GM12878 (cell line): ENCODE measurements at regions of chr1 and their contacts with region 1.

Region 1: DNA sequence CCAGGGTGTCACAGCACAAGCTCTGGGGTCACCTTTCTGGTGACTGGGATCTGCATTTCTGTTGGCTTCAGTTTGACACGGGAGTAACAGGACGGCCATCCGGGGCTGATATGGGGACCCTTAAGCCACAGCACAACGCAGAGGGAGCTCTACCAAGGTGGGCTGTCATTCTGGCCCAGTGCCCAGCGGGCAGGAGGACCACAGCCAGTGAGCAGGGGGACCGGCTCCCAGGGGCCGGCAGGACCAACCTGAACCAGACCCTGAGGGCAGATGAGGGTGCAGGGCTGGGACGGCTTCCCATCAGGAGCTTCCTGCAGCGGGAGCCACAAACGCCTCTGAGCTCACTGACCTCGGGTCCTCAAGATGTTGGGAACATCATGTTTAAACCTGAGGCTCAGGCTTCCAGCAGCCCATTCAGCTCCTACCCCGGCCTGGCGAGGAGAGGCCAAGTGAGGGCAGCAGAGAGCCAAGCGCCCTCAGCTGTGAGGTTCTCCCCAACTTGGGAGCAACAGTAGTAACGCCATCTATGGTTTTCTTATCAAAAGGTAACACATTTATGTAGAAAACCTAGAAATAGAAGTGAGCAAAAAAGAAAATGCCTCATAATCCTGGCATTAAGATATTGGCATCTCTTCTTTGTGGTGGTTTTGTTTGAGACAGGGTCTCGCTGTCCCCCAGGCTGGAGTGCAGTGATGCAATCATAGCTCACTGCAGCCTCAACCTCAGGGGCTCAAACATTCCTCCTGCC is 26.8 kb downstream of the TMEM201 start:
- DNase-seq: no peak
- ATAC-seq: peak; percentile 98
- H3K4me3 ChIP-seq: no peak overlapping the region
- H3K27ac ChIP-seq: no peak overlapping the region
- H3K4me1 ChIP-seq: no peaks in the 10 kb centered on the region
- H3K27me3 ChIP-seq: no peaks in the 10 kb centered on the region
- CTCF ChIP-seq: peak; percentile 95 to 96 (median 96)
- EP300 ChIP-seq: no peak
- POLR2A ChIP-seq: no peak
- RAD21 ChIP-seq: peak; percentile 77

Region 2: GRCh38 chr1:9588551-9589143 is 26.8 kb before region 1 on chr1 and contains the start of gene TMEM201:
- CTCF ChIA-PET with region 1: interaction called, 37 read pairs
- POLR2A ChIA-PET with region 1: interaction called, 3 read pairs
- RAD21 ChIA-PET with region 1: interaction called, 10 read pairs
- SMC1A ChIA-PET with region 1: interaction called, 6 read pairs
- in situ Hi-C with region 1: no loop called
- intact Hi-C with region 1: no loop called
- DNase-seq: peak; percentile 46
- ATAC-seq: peak; percentile 78
- H3K4me3 ChIP-seq: peak within 1 kb of the TSS; percentile 73
- H3K27ac ChIP-seq: peak within 1 kb of the TSS; percentile 67
- H3K4me1 ChIP-seq: peaks cover 26% of the 10 kb centered on the region
- H3K27me3 ChIP-seq: no peaks in the 10 kb centered on the region
- CTCF ChIP-seq: peak; percentile 61 to 89 (median 66); a peak in 5 of 6 replicates
- EP300 ChIP-seq: no peak
- POLR2A ChIP-seq: peak; percentile 72
- RAD21 ChIP-seq: peak; percentile 40; the same call in 1 of the 2 replicates
- polyA plus RNA-seq, gene TMEM201: 0.13 to 0.33 TPM

Region 3: DNA sequence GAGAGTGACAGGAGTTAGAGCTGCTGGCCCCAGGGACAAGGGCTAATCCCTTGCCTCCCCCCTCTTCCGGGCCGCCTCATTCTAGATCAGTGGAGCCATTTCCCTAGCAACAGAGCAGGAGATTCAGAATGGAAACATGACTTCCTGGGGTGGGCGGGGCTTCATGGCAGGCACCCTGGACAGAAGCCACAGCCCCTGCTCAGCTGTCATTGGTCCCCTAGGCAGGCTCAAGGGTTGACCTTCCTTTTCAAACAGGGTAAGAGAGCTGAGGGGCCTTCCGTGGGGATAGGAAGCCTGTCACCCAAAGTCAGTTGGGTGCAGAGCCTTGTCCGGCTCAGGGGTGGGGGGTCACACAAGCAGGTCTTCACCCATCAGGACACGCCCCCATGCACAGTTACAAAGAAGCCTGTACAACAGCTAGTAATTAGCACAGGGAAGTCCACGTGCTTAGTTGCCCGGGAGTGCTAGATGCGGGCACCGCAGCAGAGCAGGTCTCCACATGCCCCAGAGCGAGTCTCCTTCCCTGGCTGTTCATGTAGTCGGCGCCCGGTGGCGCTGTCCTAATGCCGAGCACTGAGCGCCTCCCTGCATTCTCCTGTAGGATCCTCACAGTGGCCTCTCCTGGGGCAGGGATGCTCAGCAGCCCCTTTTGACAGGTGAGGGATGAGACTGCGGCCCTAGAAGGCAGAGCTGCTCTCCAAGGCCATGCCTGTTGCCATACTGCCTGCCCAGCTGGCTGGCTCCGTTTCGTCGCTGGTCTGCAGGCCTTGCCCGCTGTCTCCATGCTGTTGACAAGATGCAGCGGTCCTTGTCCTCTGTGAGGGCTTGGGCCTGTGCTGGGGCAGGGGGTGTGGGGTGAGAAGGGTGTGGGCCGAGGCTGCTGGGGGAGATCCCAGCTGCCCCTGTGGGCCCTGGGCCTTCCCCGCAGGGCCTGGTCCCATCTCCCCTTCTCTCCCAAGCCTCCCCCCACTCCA is 21.7 kb before region 1 on chr1:
- CTCF ChIA-PET with region 1: interaction called, 37 read pairs
- POLR2A ChIA-PET with region 1: interaction called, 3 read pairs
- RAD21 ChIA-PET with region 1: interaction called, 10 read pairs
- SMC1A ChIA-PET with region 1: interaction called, 3 read pairs
- in situ Hi-C with region 1: no loop called
- intact Hi-C with region 1: no loop called
- DNase-seq: peak; percentile 30
- ATAC-seq: peak; percentile 70
- H3K4me3 ChIP-seq: peak overlapping the region; percentile 34
- H3K27ac ChIP-seq: peak overlapping the region; percentile 58
- H3K4me1 ChIP-seq: peaks cover 28% of the 10 kb centered on the region
- H3K27me3 ChIP-seq: no peaks in the 10 kb centered on the region
- CTCF ChIP-seq: no peak
- EP300 ChIP-seq: no peak
- POLR2A ChIP-seq: no peak
- RAD21 ChIP-seq: no peak

Region 4: DNA sequence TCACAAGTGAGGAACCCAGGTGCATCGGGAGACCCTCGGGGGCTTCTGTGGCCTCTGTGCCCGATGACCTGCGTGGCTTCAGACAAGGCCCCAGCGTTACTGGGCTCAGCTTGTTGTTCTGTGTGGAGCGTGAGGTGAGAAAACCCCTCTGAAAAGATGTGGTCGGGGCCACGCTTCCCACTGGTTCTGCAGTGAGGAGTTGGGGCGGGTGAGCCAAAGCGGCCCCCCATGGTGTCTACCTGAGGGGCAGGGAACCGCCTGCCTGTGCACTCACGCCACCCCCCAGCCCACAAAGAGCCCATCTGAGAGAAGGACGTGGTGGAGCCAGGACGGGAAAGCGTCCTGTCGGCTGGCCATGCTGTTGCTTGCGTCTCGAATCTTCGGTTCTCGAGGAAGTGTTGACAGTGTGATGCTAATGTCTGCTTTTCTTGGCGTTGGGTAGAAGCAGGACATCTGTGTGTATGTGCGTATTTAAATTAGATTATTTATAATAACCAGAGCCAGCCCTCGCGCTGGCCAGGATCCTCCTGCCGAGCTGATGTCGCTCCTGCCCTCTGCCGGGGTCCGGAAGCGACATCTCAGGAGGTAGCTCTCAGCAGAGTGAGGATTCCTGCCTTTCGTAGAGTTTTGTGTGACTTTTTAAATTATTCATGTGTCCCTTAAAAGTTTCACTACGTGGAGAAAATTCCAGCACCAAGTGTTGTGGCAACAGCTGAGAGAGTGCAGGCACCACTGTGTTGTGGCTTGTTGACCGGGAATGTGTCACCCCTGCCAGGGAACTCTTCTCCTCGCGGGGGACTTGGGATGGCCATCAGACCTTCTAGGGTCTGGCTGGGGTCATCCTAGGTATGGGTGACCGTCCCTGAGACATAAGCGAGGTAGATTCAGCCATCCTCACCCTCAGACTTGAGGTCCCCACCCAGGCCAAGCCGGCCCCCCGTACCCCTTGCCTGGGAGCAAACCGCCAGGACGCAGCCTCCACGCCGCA is 11.4 kb before region 1 on chr1:
- CTCF ChIA-PET with region 1: no interaction called
- POLR2A ChIA-PET with region 1: no interaction called
- RAD21 ChIA-PET with region 1: no interaction called
- SMC1A ChIA-PET with region 1: no interaction called
- in situ Hi-C with region 1: no loop called
- intact Hi-C with region 1: no loop called
- DNase-seq: no peak
- ATAC-seq: no peak
- H3K4me3 ChIP-seq: no peak overlapping the region
- H3K27ac ChIP-seq: no peak overlapping the region
- H3K4me1 ChIP-seq: no peaks in the 10 kb centered on the region
- H3K27me3 ChIP-seq: no peaks in the 10 kb centered on the region
- CTCF ChIP-seq: no peak
- EP300 ChIP-seq: no peak
- POLR2A ChIP-seq: no peak; the same call in 1 of the 2 replicates
- RAD21 ChIP-seq: no peak

Region 5: DNA sequence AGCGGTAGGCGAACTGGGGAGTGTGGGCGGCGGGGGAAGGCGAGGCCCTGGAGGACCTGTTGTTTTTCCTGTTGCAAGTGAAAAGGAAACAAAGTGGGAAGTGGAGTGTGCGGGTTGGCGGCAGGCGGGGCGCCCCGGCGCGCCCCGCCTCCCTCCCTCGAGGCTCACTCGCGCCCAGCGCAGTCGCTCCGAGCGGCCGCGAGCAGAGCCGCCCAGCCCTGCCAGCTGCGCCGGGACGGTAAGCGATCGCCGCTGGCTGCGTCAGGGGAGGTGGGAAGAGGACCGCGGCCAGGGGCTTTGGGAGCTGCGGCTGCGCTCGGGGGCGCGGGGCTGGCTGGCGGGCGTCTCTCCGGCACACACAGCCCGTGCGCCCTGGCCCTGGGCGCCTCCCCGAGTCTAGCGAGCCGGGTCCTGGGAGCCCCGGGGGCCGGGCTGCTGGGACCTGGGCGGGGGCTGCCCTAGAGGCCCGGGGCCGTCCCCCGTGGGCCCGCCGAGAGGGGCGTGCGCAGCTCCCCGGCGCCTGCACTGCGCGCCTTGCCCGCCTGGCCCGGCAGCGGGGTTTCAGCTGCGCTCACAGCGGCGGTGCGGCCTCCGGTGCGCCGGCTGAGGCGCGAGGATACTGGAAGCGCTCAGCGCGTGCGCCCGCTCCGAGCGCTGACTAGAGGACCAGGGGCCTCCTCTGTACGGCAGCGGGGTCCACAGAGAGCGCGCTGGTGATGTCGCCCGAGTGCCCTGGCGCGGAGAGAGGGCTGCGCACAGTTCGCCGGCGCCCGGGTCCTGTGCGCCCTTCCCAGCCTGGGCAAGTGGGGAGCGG is 36.3 kb after region 1 on chr1 and contains the start of gene PIK3CD:
- CTCF ChIA-PET with region 1: interaction called, 29 read pairs
- POLR2A ChIA-PET with region 1: interaction called, 9 read pairs
- RAD21 ChIA-PET with region 1: interaction called, 14 read pairs
- SMC1A ChIA-PET with region 1: interaction called, 5 read pairs
- in situ Hi-C with region 1: no loop called
- intact Hi-C with region 1: no loop called
- DNase-seq: no peak
- ATAC-seq: peak; percentile 47
- H3K4me3 ChIP-seq: peak within 1 kb of the TSS; percentile 86
- H3K27ac ChIP-seq: peak within 1 kb of the TSS; percentile 89
- H3K4me1 ChIP-seq: peaks cover 8% of the 10 kb centered on the region
- H3K27me3 ChIP-seq: no peaks in the 10 kb centered on the region
- CTCF ChIP-seq: no peak
- EP300 ChIP-seq: no peak
- POLR2A ChIP-seq: peak; percentile 79
- RAD21 ChIP-seq: no peak
- polyA plus RNA-seq, gene PIK3CD: 7.0 to 12.7 TPM

Region 6: GRCh38 chr1:9724706-9725476 is 109.4 kb after region 1 on chr1:
- CTCF ChIA-PET with region 1: interaction called, 21 read pairs
- POLR2A ChIA-PET with region 1: no interaction called
- RAD21 ChIA-PET with region 1: interaction called, 4 read pairs
- SMC1A ChIA-PET with region 1: interaction called, 6 read pairs
- in situ Hi-C with region 1: no loop called
- intact Hi-C with region 1: no loop called
- DNase-seq: no peak
- ATAC-seq: peak; percentile 91
- H3K4me3 ChIP-seq: no peak overlapping the region
- H3K27ac ChIP-seq: no peak overlapping the region
- H3K4me1 ChIP-seq: no peaks in the 10 kb centered on the region
- H3K27me3 ChIP-seq: no peaks in the 10 kb centered on the region
- CTCF ChIP-seq: peak; percentile 92 to 96 (median 95)
- EP300 ChIP-seq: no peak
- POLR2A ChIP-seq: no peak; the same call in 1 of the 2 replicates
- RAD21 ChIP-seq: peak; percentile 61

Region 7: DNA sequence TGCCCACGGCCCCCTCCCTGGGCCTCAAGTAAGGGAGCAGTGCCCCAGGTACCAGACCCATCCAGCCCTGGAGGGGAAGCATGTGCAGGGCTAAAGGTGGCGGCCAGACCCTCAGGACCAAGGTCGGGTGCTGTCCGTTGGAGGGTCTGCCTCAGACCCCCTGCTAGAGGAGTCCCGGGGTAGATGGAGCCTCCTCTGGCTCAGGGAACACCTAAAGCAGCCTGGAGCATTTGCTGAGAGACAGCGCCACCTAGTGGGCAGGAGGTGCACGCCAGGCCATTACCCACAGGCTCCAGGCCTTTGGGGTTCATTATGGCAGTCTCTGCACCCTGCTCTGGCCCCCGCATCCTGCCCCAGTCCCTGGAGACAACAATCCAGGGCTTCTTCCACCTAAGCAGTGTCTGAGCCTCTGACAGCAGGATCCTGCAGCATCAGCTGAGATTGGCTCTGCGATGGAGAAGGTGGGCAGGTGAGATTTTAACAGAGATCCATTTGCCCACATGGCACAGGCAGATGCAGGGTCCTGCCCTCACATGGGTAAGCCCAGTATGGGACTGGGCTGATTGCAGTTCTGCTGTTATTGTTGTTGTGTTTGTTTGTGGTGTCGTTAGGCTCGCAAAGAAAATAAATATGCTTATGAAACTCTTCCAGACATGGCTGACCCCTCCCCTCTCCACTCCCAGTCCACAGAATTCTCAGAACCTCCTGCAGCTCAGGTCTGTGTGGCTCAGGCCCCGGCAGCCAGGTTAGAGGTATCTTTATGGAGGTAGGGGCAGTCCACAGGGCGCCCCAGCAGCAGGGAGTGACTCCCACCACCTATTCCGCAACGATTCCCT is 252.1 kb after region 1 on chr1:
- CTCF ChIA-PET with region 1: interaction called, 27 read pairs
- POLR2A ChIA-PET with region 1: no interaction called
- RAD21 ChIA-PET with region 1: interaction called, 14 read pairs
- SMC1A ChIA-PET with region 1: interaction called, 11 read pairs
- in situ Hi-C with region 1: no loop called
- intact Hi-C with region 1: no loop called
- DNase-seq: peak; percentile 36
- ATAC-seq: peak; percentile 90
- H3K4me3 ChIP-seq: no peak overlapping the region
- H3K27ac ChIP-seq: no peak overlapping the region
- H3K4me1 ChIP-seq: peaks cover 22% of the 10 kb centered on the region
- H3K27me3 ChIP-seq: no peaks in the 10 kb centered on the region
- CTCF ChIP-seq: peak; percentile 94 to 98 (median 98); a peak in 5 of 6 replicates
- EP300 ChIP-seq: no peak
- POLR2A ChIP-seq: no peak
- RAD21 ChIP-seq: peak; percentile 97